Naive thymus-derived CD4-positive, alpha-beta T cell (primary cell): ENCODE measurements at regions of chr1 and their contacts with region 1.

Region 1: DNA sequence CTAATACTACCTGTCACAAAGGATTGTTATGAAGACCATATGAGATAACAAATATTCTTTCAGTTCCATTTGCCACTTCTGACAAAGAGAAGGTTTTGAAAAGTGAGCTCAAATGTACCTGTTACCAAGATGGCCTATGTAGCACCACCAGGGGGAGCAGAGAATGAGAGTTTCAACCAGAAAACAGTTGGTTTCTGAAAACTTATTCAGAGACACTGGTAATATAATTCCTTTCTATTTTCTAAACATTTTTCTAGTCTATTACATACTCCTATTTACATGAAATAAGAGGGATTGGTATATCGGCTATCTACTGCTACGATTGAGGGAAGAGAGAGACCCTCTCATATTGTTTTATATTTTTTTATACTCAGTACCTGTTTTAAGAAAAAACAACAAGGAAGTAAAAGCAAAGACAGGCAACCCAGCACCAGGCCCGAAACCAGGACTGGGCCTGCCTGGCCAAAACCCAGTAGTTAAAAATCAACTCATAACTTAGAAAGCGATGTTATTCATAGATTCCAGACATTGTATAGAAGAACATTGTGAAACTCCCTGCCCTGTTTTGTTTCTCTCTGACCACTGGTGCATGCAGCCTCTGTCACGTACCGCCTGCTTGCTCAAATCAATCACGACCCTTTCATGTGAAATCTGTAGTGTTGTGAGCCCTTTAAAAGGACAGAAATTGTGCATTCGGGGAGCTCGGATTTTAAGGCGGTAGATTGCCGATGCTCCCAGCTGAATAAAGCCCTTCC is 48.3 kb downstream of the IL23R start:
- DNase-seq: peak in 7 of 9 donors; percentile 18 to 58 (median 45)
- ATAC-seq: peak; percentile 57
- H3K4me3 ChIP-seq: no peak overlapping the region
- H3K4me3 Mint-ChIP-seq: no peak overlapping the region
- H3K27ac ChIP-seq: no peak overlapping the region
- H3K27ac Mint-ChIP-seq: peak overlapping the region in 3 of 9 donors; percentile 27 to 77 (median 70)
- H3K4me1 ChIP-seq: peaks cover 0 to 8% of the 10 kb centered on the region in 2 donors
- H3K4me1 Mint-ChIP-seq: peaks cover 14 to 43% (median 23%) of the 10 kb centered on the region in 7 donors
- H3K27me3 ChIP-seq: no peaks in the 10 kb centered on the region
- H3K27me3 Mint-ChIP-seq: no peaks in the 10 kb centered on the region

Region 2: DNA sequence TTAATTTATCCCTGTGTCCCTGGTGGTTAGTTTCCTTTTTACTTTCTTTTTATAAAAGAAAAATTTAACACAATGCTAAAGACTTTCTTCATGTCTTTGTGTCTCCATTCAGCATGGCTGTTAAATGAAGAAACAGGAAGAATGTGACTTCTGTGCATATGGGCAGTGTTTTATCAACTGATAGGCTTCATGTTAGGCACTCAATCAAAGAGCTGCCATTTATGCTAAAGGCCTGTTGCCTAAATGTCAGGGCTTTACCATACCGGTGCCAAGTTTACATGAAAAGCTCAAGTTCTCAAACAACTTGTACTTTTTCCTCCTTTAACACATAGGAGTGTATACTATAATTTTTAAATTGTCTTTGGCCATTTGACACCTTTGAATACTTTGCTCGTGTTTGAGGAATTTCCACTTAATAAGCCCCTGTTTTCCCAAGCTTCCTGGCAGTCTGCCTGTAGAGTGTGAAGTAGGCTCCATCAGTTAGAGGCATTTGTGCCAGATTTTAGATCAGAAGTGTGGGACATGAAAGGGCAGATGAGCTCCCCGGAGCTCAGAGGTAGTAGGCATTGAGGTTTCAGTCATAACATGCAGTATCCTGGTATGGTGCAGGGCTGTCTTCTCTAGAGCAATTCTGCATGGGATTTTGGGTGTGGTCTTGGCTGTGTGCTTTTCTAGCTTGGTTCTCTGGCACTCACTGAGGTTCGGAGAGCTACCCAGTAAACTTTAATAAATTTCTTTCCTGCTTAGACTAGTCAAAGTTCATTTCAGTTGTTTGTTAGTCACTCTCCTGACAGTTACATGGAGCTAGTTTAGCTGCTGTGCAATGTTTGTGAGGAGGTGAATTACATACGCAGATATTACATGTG is 1675.1 kb before region 1 on chr1:
- CTCF ChIA-PET with region 1: no interaction called
- POLR2A ChIA-PET with region 1: no interaction called
- intact Hi-C with region 1: no loop called
- DNase-seq: no peak
- ATAC-seq: no peak
- H3K4me3 ChIP-seq: no peak overlapping the region
- H3K4me3 Mint-ChIP-seq: no peak overlapping the region
- H3K27ac ChIP-seq: no peak overlapping the region
- H3K27ac Mint-ChIP-seq: no peak overlapping the region
- H3K4me1 ChIP-seq: no peaks in the 10 kb centered on the region
- H3K4me1 Mint-ChIP-seq: peaks cover 0 to 8% (median 4%) of the 10 kb centered on the region in 7 donors
- H3K27me3 ChIP-seq: no peaks in the 10 kb centered on the region
- H3K27me3 Mint-ChIP-seq: peaks cover 0 to 20% (median 0%) of the 10 kb centered on the region in 5 donors

Region 3: DNA sequence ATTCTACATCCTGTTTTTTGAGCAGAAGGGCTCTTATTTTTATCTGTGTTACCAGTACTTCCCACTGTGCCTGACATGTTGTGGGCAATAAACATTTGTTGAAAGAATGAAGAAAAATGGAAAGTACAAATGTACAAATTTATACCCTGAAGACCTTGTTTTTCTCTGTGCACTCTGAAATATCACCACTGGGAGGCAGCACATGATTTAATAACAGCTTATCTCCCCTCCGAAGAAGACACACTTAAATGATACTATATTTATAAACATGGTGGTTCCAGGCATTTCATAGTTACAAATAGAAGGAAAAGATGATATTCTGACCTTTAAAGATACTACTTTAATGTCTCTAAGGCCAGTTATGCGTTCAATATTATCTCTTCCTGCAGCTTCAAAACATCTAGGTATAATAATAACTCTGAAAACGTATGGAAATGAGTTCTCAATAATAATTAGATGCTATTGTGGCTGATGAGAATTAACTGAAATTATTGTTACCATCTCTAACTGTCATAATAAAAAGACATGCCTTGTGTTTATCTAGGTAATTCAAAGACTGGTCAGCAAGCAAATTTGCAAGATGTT is 449.5 kb before region 1 on chr1:
- CTCF ChIA-PET with region 1: interaction called, 52 read pairs
- POLR2A ChIA-PET with region 1: no interaction called
- intact Hi-C with region 1: loop called (anchors 1 kb)
- DNase-seq: peak in 7 of 9 donors; percentile 48 to 68 (median 62)
- ATAC-seq: peak; percentile 81
- H3K4me3 ChIP-seq: no peak overlapping the region
- H3K4me3 Mint-ChIP-seq: no peak overlapping the region
- H3K27ac ChIP-seq: no peak overlapping the region
- H3K27ac Mint-ChIP-seq: no peak overlapping the region
- H3K4me1 ChIP-seq: no peaks in the 10 kb centered on the region
- H3K4me1 Mint-ChIP-seq: peaks cover 7 to 21% (median 15%) of the 10 kb centered on the region in 7 donors
- H3K27me3 ChIP-seq: no peaks in the 10 kb centered on the region
- H3K27me3 Mint-ChIP-seq: peaks cover 0 to 3% (median 0%) of the 10 kb centered on the region in 5 donors

Region 4: GRCh38 chr1:66981679-66982078 is 232.9 kb before region 1 on chr1:
- CTCF ChIA-PET with region 1: interaction called, 3 read pairs
- POLR2A ChIA-PET with region 1: no interaction called
- intact Hi-C with region 1: loop called (anchors 5 kb)
- DNase-seq: peak in 7 of 9 donors; percentile 52 to 78 (median 69)
- ATAC-seq: peak; percentile 93
- H3K4me3 ChIP-seq: peak overlapping the region; percentile 22
- H3K4me3 Mint-ChIP-seq: peak overlapping the region; percentile 64 to 84 (median 80)
- H3K27ac ChIP-seq: peak overlapping the region; percentile 78
- H3K27ac Mint-ChIP-seq: peak overlapping the region; percentile 83 to 94 (median 93)
- H3K4me1 ChIP-seq: peaks cover 0 to 8% of the 10 kb centered on the region in 2 donors
- H3K4me1 Mint-ChIP-seq: peaks cover 6 to 48% (median 37%) of the 10 kb centered on the region in 7 donors
- H3K27me3 ChIP-seq: no peaks in the 10 kb centered on the region
- H3K27me3 Mint-ChIP-seq: no peaks in the 10 kb centered on the region

Region 5: GRCh38 chr1:67077593-67077992 is 137.0 kb before region 1 on chr1:
- CTCF ChIA-PET with region 1: no interaction called
- POLR2A ChIA-PET with region 1: no interaction called
- intact Hi-C with region 1: no loop called
- DNase-seq: no peak
- ATAC-seq: no peak
- H3K4me3 ChIP-seq: no peak overlapping the region
- H3K4me3 Mint-ChIP-seq: no peak overlapping the region
- H3K27ac ChIP-seq: no peak overlapping the region
- H3K27ac Mint-ChIP-seq: no peak overlapping the region
- H3K4me1 ChIP-seq: no peaks in the 10 kb centered on the region
- H3K4me1 Mint-ChIP-seq: no peaks in the 10 kb centered on the region
- H3K27me3 ChIP-seq: no peaks in the 10 kb centered on the region
- H3K27me3 Mint-ChIP-seq: peaks cover 0 to 4% (median 2%) of the 10 kb centered on the region in 5 donors

Region 6: GRCh38 chr1:67162957-67163356 is 51.6 kb before region 1 on chr1:
- CTCF ChIA-PET with region 1: interaction called, 49 read pairs
- POLR2A ChIA-PET with region 1: interaction called, 11 read pairs
- intact Hi-C with region 1: no loop called
- DNase-seq: peak in 1 of 9 donors; percentile 43
- ATAC-seq: no peak
- H3K4me3 ChIP-seq: no peak overlapping the region
- H3K4me3 Mint-ChIP-seq: peak overlapping the region in 1 of 10 donors; percentile 45
- H3K27ac ChIP-seq: no peak overlapping the region
- H3K27ac Mint-ChIP-seq: peak overlapping the region in 1 of 9 donors; percentile 83
- H3K4me1 ChIP-seq: no peaks in the 10 kb centered on the region
- H3K4me1 Mint-ChIP-seq: peaks cover 7 to 46% (median 10%) of the 10 kb centered on the region in 7 donors
- H3K27me3 ChIP-seq: no peaks in the 10 kb centered on the region
- H3K27me3 Mint-ChIP-seq: peaks cover 0 to 17% (median 5%) of the 10 kb centered on the region in 5 donors

Region 7: GRCh38 chr1:67194209-67194863 is 20.3 kb before region 1 on chr1:
- CTCF ChIA-PET with region 1: no interaction called
- POLR2A ChIA-PET with region 1: interaction called, 3 read pairs
- intact Hi-C with region 1: loop called in 1 of 2 experiments (anchors 1 kb)
- DNase-seq: peak in 4 of 9 donors; percentile 19 to 49 (median 31)
- ATAC-seq: peak; percentile 73
- H3K4me3 ChIP-seq: no peak overlapping the region
- H3K4me3 Mint-ChIP-seq: peak overlapping the region in 2 of 10 donors; percentile 15 to 17
- H3K27ac ChIP-seq: no peak overlapping the region
- H3K27ac Mint-ChIP-seq: peak overlapping the region in 1 of 9 donors; percentile 75
- H3K4me1 ChIP-seq: peaks cover 4 to 20% of the 10 kb centered on the region in 2 donors
- H3K4me1 Mint-ChIP-seq: peaks cover 4 to 30% (median 12%) of the 10 kb centered on the region in 7 donors
- H3K27me3 ChIP-seq: no peaks in the 10 kb centered on the region
- H3K27me3 Mint-ChIP-seq: peaks cover 0 to 3% (median 0%) of the 10 kb centered on the region in 5 donors

Region 8: DNA sequence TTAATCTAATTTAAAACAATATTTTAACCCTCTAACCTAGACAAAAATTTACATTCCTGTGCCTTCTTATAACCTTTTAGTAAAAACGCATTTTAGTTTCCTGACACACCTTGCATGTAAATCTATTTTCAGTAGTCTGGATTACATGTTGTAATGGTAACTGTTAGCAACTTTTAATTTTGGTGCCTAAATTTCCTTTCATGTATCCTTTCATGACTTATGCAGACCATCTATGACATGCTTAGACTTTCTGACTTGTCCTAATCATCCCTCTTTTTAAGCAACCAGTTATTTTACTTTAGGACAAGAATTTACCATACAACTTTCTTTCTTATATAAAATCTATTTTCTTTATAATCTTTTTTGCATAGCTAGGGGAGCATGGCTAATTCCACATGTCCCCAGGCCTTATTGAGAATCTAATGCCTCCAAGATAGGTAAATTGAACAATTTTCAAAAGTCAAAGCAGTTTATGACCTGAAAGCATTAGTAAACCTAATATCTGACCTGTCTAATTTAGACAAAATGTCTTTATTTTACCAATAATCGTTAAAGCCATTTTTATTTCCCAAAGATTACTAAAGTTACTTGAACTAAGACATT is 35.6 kb after region 1 on chr1:
- CTCF ChIA-PET with region 1: no interaction called
- POLR2A ChIA-PET with region 1: no interaction called
- intact Hi-C with region 1: no loop called
- DNase-seq: no peak
- ATAC-seq: no peak
- H3K4me3 ChIP-seq: no peak overlapping the region
- H3K4me3 Mint-ChIP-seq: no peak overlapping the region
- H3K27ac ChIP-seq: no peak overlapping the region
- H3K27ac Mint-ChIP-seq: no peak overlapping the region
- H3K4me1 ChIP-seq: no peaks in the 10 kb centered on the region
- H3K4me1 Mint-ChIP-seq: no peaks in the 10 kb centered on the region
- H3K27me3 ChIP-seq: no peaks in the 10 kb centered on the region
- H3K27me3 Mint-ChIP-seq: peaks cover 0 to 16% (median 0%) of the 10 kb centered on the region in 5 donors

Region 9: GRCh38 chr1:67489643-67490042 is 275.0 kb after region 1 on chr1:
- CTCF ChIA-PET with region 1: interaction called, 11 read pairs
- POLR2A ChIA-PET with region 1: no interaction called
- intact Hi-C with region 1: no loop called
- DNase-seq: peak in 2 of 9 donors; percentile 5 to 13
- ATAC-seq: no peak
- H3K4me3 ChIP-seq: no peak overlapping the region
- H3K4me3 Mint-ChIP-seq: no peak overlapping the region
- H3K27ac ChIP-seq: no peak overlapping the region
- H3K27ac Mint-ChIP-seq: no peak overlapping the region
- H3K4me1 ChIP-seq: no peaks in the 10 kb centered on the region
- H3K4me1 Mint-ChIP-seq: peaks cover 0 to under 1% (median 0%) of the 10 kb centered on the region in 7 donors
- H3K27me3 ChIP-seq: no peaks in the 10 kb centered on the region
- H3K27me3 Mint-ChIP-seq: no peaks in the 10 kb centered on the region

Region 10: GRCh38 chr1:67760030-67760821 is 545.6 kb after region 1 on chr1:
- CTCF ChIA-PET with region 1: interaction called, 5 read pairs
- POLR2A ChIA-PET with region 1: no interaction called
- intact Hi-C with region 1: loop called in 1 of 2 experiments (anchors 10 kb)
- DNase-seq: peak; percentile 17 to 64 (median 45)
- ATAC-seq: peak; percentile 73
- H3K4me3 ChIP-seq: no peak overlapping the region
- H3K4me3 Mint-ChIP-seq: no peak overlapping the region
- H3K27ac ChIP-seq: no peak overlapping the region
- H3K27ac Mint-ChIP-seq: no peak overlapping the region
- H3K4me1 ChIP-seq: no peaks in the 10 kb centered on the region
- H3K4me1 Mint-ChIP-seq: no peaks in the 10 kb centered on the region
- H3K27me3 ChIP-seq: peaks cover 0 to 5% of the 10 kb centered on the region in 2 donors
- H3K27me3 Mint-ChIP-seq: peaks cover 18 to 33% (median 24%) of the 10 kb centered on the region in 5 donors